ENCODE measurements at regions of chr11 and their contacts with region 1.

Region 1: GRCh38 chr11:116742104-116742503 is 30.7 kb downstream of the BUD13 start:
- DNase-seq: no peak
- H3K4me3 ChIP-seq: no peak overlapping the region
- H3K27me3 ChIP-seq: no peaks in the 10 kb centered on the region
- CTCF ChIP-seq: no peak

Region 2: GRCh38 chr11:116348226-116348625 is 393.9 kb before region 1 on chr11:
- CTCF ChIA-PET with region 1: no interaction called
- POLR2A ChIA-PET with region 1: no interaction called
- DNase-seq: no peak
- H3K4me3 ChIP-seq: no peak overlapping the region
- H3K27me3 ChIP-seq: no peaks in the 10 kb centered on the region
- CTCF ChIP-seq: no peak

Region 3: GRCh38 chr11:116762132-116762531 is 20.0 kb after region 1 on chr11:
- CTCF ChIA-PET with region 1: interaction called, 47 read pairs
- POLR2A ChIA-PET with region 1: interaction called, 19 read pairs
- DNase-seq: no peak
- H3K4me3 ChIP-seq: no peak overlapping the region
- H3K27me3 ChIP-seq: no peaks in the 10 kb centered on the region
- CTCF ChIP-seq: no peak